ENCODE measurements at regions of chr6 and their contacts with region 1.

Region 1: GRCh38 chr6:110039364-110039980 is 61.4 kb downstream of the GPR6 start:
- DNase-seq: peak; percentile 92
- H3K4me3 ChIP-seq: peak overlapping the region in 3 of 4 donors; percentile 4 to 51 (median 11)
- H3K27ac ChIP-seq: peak overlapping the region in 3 of 4 donors; percentile 14 to 69 (median 41)
- H3K4me1 ChIP-seq: peaks cover 0 to 16% (median 0%) of the 10 kb centered on the region in 4 donors
- H3K27me3 ChIP-seq: no peaks in the 10 kb centered on the region
- CTCF ChIP-seq: peak; percentile 84 to 91 (median 86)
- EP300 ChIP-seq: no peak
- POLR2A ChIP-seq: no peak

Region 2: GRCh38 chr6:109406196-109406595 is 633.3 kb before region 1 on chr6:
- in situ Hi-C with region 1: loop called in 1 of 4 experiments (anchors 25 kb)
- intact Hi-C with region 1: no loop called
- DNase-seq: no peak
- H3K4me3 ChIP-seq: no peak overlapping the region
- H3K27ac ChIP-seq: no peak overlapping the region
- H3K4me1 ChIP-seq: no peaks in the 10 kb centered on the region
- H3K27me3 ChIP-seq: no peaks in the 10 kb centered on the region
- CTCF ChIP-seq: no peak
- EP300 ChIP-seq: no peak
- POLR2A ChIP-seq: no peak

Region 3: DNA sequence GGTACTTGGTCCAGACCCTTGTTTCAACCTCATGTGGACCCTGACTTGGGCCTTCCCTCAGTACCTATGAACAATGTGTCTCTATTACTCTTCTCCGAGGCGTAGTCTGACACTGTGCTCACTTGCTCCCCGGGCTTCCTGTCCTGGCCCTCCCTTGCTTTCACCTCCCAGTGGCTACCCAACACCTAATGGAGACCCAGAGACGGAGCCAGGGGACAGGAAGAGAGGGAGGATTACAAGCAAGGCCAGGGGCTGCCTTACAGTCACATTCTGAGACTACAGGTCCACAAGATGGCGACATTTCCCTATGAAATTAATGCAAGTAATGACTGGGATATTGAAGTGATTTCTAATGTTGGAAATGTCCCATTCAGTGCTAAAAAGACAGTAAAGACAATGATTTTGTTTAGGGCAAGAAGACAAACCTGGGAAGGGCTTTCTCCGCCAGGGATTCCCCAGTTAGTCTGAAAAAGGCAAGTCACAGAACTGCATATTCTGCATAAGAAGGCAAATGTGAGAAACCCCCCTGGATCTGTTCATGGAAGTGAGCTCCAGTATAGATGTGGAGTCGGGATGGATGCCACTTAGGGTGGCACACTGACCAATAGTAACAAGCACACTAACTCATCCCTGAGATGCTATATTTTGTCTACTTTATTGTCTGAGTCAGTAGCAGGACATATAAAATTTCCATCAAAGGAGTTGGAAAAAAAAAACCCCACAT is 512.4 kb before region 1 on chr6:
- in situ Hi-C with region 1: loop called in 2 of 4 experiments (anchors 10 to 25 kb)
- intact Hi-C with region 1: no loop called
- DNase-seq: peak; percentile 22
- H3K4me3 ChIP-seq: no peak overlapping the region
- H3K27ac ChIP-seq: no peak overlapping the region
- H3K4me1 ChIP-seq: no peaks in the 10 kb centered on the region
- H3K27me3 ChIP-seq: no peaks in the 10 kb centered on the region
- CTCF ChIP-seq: peak; percentile 32 to 47 (median 43)
- EP300 ChIP-seq: no peak
- POLR2A ChIP-seq: no peak

Region 4: DNA sequence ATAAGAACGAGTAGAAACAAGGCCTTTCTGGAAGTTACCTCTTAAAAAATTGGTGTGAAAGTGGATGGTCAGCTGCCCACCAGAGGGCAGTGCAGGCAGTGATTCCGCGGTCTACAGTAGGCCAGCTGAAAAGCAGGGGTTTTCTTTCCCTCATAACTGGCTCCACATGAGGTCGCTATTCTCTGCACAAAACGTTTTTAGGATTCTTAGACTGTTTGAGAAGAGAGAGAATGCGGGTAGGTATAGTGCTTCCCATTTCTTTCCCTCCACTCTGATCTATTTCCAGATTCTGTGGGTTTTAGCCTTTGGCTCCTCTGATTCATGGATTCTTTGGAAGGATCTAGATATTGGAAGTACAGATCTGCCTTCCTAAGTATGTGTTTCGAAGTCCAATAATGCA is 334.2 kb before region 1 on chr6:
- in situ Hi-C with region 1: loop called (anchors 5 to 10 kb)
- intact Hi-C with region 1: loop called (anchors 5 kb)
- DNase-seq: peak; percentile 84
- H3K4me3 ChIP-seq: no peak overlapping the region
- H3K27ac ChIP-seq: no peak overlapping the region
- H3K4me1 ChIP-seq: peaks cover 0 to 3% (median 0%) of the 10 kb centered on the region in 4 donors
- H3K27me3 ChIP-seq: no peaks in the 10 kb centered on the region
- CTCF ChIP-seq: peak; percentile 90 to 98 (median 93)
- EP300 ChIP-seq: no peak
- POLR2A ChIP-seq: no peak

Measured in transverse colon (tissue), 4 donors.